HepG2 (cell line): ENCODE measurements at regions of chr6 and their contacts with region 1.

Region 1: GRCh38 chr6:119742188-119742803 is 392.7 kb upstream of the MAN1A1 start:
- DNase-seq: peak; percentile 54
- ATAC-seq: peak; percentile 99
- H3K4me3 ChIP-seq: no peak overlapping the region
- H3K27ac ChIP-seq: no peak overlapping the region
- H3K4me1 ChIP-seq: no peaks in the 10 kb centered on the region
- H3K27me3 ChIP-seq: no peaks in the 10 kb centered on the region
- CTCF ChIP-seq: peak; percentile 92
- EP300 ChIP-seq: no peak
- POLR2A ChIP-seq: no peak
- RAD21 ChIP-seq: peak; percentile 83

Region 2: GRCh38 chr6:119129148-119129967 is 612.9 kb before region 1 on chr6:
- CTCF ChIA-PET with region 1: no interaction called
- POLR2A ChIA-PET with region 1: no interaction called
- in situ Hi-C with region 1: loop called (anchors 25 kb)
- intact Hi-C with region 1: no loop called
- DNase-seq: peak; percentile 76
- ATAC-seq: peak; percentile 80
- H3K4me3 ChIP-seq: peak overlapping the region in 1 of 3 experiments; percentile 6; a peak in 1 of 6 replicates
- H3K27ac ChIP-seq: peak overlapping the region; percentile 35
- H3K4me1 ChIP-seq: peaks cover 43% of the 10 kb centered on the region
- H3K27me3 ChIP-seq: no peaks in the 10 kb centered on the region
- CTCF ChIP-seq: peak; percentile 82
- EP300 ChIP-seq: no peak
- POLR2A ChIP-seq: no peak
- RAD21 ChIP-seq: peak; percentile 62

Region 3: GRCh38 chr6:119716668-119717270 is 25.5 kb before region 1 on chr6:
- CTCF ChIA-PET with region 1: no interaction called
- POLR2A ChIA-PET with region 1: no interaction called
- in situ Hi-C with region 1: no loop called
- intact Hi-C with region 1: loop called (anchors 1 kb)
- DNase-seq: no peak
- ATAC-seq: no peak
- H3K4me3 ChIP-seq: no peak overlapping the region
- H3K27ac ChIP-seq: no peak overlapping the region
- H3K4me1 ChIP-seq: no peaks in the 10 kb centered on the region
- H3K27me3 ChIP-seq: no peaks in the 10 kb centered on the region
- CTCF ChIP-seq: no peak
- EP300 ChIP-seq: no peak
- POLR2A ChIP-seq: no peak
- RAD21 ChIP-seq: no peak

Region 4: GRCh38 chr6:120230010-120230409 is 487.7 kb after region 1 on chr6:
- CTCF ChIA-PET with region 1: no interaction called
- POLR2A ChIA-PET with region 1: no interaction called
- in situ Hi-C with region 1: no loop called
- intact Hi-C with region 1: loop called (anchors 5 kb)
- DNase-seq: peak; percentile 15
- ATAC-seq: peak; percentile 91
- H3K4me3 ChIP-seq: no peak overlapping the region
- H3K27ac ChIP-seq: no peak overlapping the region
- H3K4me1 ChIP-seq: peaks cover 11% of the 10 kb centered on the region
- H3K27me3 ChIP-seq: no peaks in the 10 kb centered on the region
- CTCF ChIP-seq: peak; percentile 36
- EP300 ChIP-seq: no peak
- POLR2A ChIP-seq: no peak
- RAD21 ChIP-seq: no peak

Region 5: GRCh38 chr6:120826253-120826652 is 1084.0 kb after region 1 on chr6:
- CTCF ChIA-PET with region 1: interaction called, 41 read pairs
- POLR2A ChIA-PET with region 1: no interaction called
- in situ Hi-C with region 1: loop called (anchors 25 kb)
- intact Hi-C with region 1: loop called (anchors 1 kb)
- DNase-seq: peak; percentile 52
- ATAC-seq: peak; percentile 97
- H3K4me3 ChIP-seq: no peak overlapping the region
- H3K27ac ChIP-seq: no peak overlapping the region
- H3K4me1 ChIP-seq: no peaks in the 10 kb centered on the region
- H3K27me3 ChIP-seq: no peaks in the 10 kb centered on the region
- CTCF ChIP-seq: peak; percentile 73
- EP300 ChIP-seq: no peak
- POLR2A ChIP-seq: no peak
- RAD21 ChIP-seq: peak; percentile 44; the same call in 1 of the 2 replicates

Region 6: GRCh38 chr6:121305957-121306607 is 1563.8 kb after region 1 on chr6:
- CTCF ChIA-PET with region 1: interaction called, 3 read pairs
- POLR2A ChIA-PET with region 1: no interaction called
- in situ Hi-C with region 1: loop called (anchors 25 kb)
- intact Hi-C with region 1: loop called (anchors 2 kb)
- DNase-seq: peak; percentile 59
- ATAC-seq: peak; percentile 95
- H3K4me3 ChIP-seq: no peak overlapping the region
- H3K27ac ChIP-seq: no peak overlapping the region
- H3K4me1 ChIP-seq: no peaks in the 10 kb centered on the region
- H3K27me3 ChIP-seq: no peaks in the 10 kb centered on the region
- CTCF ChIP-seq: peak; percentile 77
- EP300 ChIP-seq: no peak
- POLR2A ChIP-seq: no peak
- RAD21 ChIP-seq: peak; percentile 61; the same call in 1 of the 2 replicates